ENCODE measurements at regions of chr1 and their contacts with region 1.

Region 1: GRCh38 chr1:172322219-172323061 is 98.0 kb upstream of the C1orf105 start:
- DNase-seq: peak; percentile 97
- ATAC-seq: peak; percentile 76
- H3K4me3 ChIP-seq: peak overlapping the region; percentile 57
- H3K27ac ChIP-seq: peak overlapping the region; percentile 88
- H3K4me1 ChIP-seq: peaks cover 53% of the 10 kb centered on the region
- H3K27me3 ChIP-seq: no peaks in the 10 kb centered on the region
- CTCF ChIP-seq: peak; percentile 37; the same call in 1 of the 2 replicates

Region 2: GRCh38 chr1:172024516-172024915 is 297.9 kb before region 1 on chr1:
- CTCF ChIA-PET with region 1: no interaction called
- POLR2A ChIA-PET with region 1: no interaction called
- intact Hi-C with region 1: no loop called
- DNase-seq: no peak
- ATAC-seq: peak; percentile 32; the same call in 1 of the 2 replicates
- H3K4me3 ChIP-seq: no peak overlapping the region
- H3K27ac ChIP-seq: no peak overlapping the region
- H3K4me1 ChIP-seq: peaks cover 6% of the 10 kb centered on the region; the same call in 1 of the 2 replicates
- H3K27me3 ChIP-seq: peaks cover 21% of the 10 kb centered on the region; the same call in 1 of the 2 replicates
- CTCF ChIP-seq: no peak

Region 3: DNA sequence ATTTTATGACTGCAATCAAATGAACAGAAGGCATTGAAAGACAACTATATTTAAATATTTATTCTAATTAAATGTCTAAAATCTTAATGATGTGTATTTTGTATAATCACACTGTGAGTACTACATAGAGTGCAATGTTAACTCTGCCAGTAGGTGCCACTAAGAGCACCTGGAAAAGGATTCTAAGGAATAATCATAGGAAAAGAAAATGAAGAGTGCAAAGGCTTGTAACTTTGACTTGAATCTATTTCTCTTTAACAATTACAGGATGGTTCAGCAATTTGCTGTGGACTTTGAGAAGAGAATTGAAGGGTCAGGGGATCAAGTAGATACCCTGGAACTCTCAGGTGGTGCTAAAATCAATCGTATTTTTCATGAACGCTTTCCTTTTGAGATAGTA is 280.7 kb before region 1 on chr1:
- CTCF ChIA-PET with region 1: interaction called, 4 read pairs
- POLR2A ChIA-PET with region 1: interaction called, 3 read pairs
- intact Hi-C with region 1: loop called (anchors 2 kb)
- DNase-seq: peak; percentile 72
- ATAC-seq: peak; percentile 48
- H3K4me3 ChIP-seq: no peak overlapping the region
- H3K27ac ChIP-seq: no peak overlapping the region
- H3K4me1 ChIP-seq: peaks cover 19% of the 10 kb centered on the region
- H3K27me3 ChIP-seq: no peaks in the 10 kb centered on the region
- CTCF ChIP-seq: peak; percentile 80

Region 4: DNA sequence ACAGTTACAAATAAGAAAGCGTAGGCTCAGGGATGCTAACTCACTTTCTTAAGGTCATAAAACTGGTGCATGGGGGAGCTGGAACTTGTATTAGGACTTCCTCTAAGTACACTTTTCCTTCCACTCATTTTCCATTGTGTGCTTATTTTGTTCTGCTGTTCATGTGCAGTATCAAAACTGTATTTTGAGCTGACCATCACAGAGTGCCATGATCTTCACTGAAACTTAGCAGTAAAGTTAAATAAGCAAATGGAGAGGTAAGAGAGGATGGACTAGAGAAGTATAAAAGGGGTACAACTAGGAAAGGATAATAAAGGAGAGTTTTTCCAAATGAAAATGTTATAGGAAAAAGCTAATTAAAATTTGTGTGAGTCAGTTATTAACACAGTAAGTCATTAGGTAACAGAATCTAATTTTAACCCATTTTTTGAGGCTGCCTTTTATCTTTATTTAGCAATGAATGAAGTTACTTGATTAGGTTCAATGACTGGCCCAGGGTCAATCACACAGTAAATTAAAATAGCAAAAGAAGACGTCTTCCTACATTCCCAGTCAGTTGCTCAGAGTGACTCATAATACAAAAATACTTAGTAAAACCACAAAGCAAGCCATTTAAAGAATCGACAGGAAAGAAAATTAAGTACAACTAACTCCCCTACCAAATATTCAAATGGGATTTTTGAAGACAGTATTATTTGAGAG is 67.8 kb before region 1 on chr1:
- CTCF ChIA-PET with region 1: no interaction called
- POLR2A ChIA-PET with region 1: no interaction called
- intact Hi-C with region 1: loop called (anchors 1 kb)
- DNase-seq: peak; percentile 98
- ATAC-seq: peak; percentile 96
- H3K4me3 ChIP-seq: peak overlapping the region; percentile 0; the same call in 1 of the 2 replicates
- H3K27ac ChIP-seq: peak overlapping the region; percentile 53
- H3K4me1 ChIP-seq: peaks cover 23% of the 10 kb centered on the region
- H3K27me3 ChIP-seq: no peaks in the 10 kb centered on the region
- CTCF ChIP-seq: no peak

Region 5: GRCh38 chr1:172343240-172344160 is 21.1 kb after region 1 on chr1:
- CTCF ChIA-PET with region 1: interaction called, 3 read pairs
- POLR2A ChIA-PET with region 1: no interaction called
- intact Hi-C with region 1: loop called (anchors 1 kb)
- DNase-seq: peak; percentile 85
- ATAC-seq: peak; percentile 93
- H3K4me3 ChIP-seq: peak overlapping the region; percentile 48
- H3K27ac ChIP-seq: peak overlapping the region; percentile 70
- H3K4me1 ChIP-seq: peaks cover 24% of the 10 kb centered on the region
- H3K27me3 ChIP-seq: no peaks in the 10 kb centered on the region
- CTCF ChIP-seq: no peak

Region 6: DNA sequence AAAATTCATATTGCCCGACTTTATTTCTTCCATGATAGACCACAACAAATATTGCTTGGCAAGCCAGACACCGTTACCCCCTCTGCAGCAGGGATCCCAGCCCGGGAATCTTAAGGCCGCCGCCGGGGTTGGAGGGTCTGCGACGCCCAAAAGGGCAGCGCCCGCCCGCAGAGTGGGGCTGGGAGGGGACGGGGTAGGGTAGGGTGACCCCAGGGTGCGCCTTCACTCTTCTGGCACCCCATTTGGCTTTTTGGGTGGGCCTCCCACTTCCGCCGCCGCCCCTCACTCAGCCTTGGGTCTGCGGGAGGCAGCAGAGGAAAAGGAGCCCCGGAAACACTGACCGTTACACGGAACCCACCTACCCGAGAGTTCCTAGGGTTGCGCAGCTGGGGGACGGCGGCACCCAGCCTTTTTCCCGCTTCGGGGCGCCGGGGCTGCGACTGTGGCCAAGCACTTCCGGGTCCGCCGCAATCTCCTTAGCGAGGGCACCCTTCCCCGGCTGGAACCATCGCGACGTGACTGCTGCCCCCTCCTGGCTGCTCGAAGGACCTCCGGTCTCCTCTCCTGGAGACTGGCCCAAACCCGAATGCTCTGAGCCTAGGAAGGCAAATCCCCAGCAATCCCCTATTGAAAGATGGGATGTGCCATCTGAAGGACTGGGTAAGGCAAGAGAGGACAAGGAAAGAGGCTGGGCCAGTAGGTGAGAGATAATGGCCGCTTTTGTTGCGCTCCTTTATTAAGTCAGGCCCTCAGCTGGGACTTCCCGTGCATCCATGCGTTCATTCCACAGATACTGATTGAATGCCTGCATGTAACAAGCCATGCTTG is 121.4 kb after region 1 on chr1 and contains the start of gene PIGC:
- CTCF ChIA-PET with region 1: no interaction called
- POLR2A ChIA-PET with region 1: no interaction called
- intact Hi-C with region 1: loop called (anchors 1 kb)
- DNase-seq: peak; percentile 99
- ATAC-seq: peak; percentile 76
- H3K4me3 ChIP-seq: peak within 1 kb of the TSS; percentile 75
- H3K27ac ChIP-seq: peak within 1 kb of the TSS; percentile 69
- H3K4me1 ChIP-seq: peaks cover 47% of the 10 kb centered on the region
- H3K27me3 ChIP-seq: no peaks in the 10 kb centered on the region
- CTCF ChIP-seq: peak; percentile 100
- total RNA-seq, gene PIGC: 57.5 and 70.5 TPM in 2 replicates